ENCODE measurements at regions of chr5 and their contacts with region 1.

Region 1: GRCh38 chr5:176415952-176416924 is at the start of gene CLTB:
- DNase-seq: peak; percentile 77 to 87
- ATAC-seq: peak; percentile 95 to 97
- H3K4me3 ChIP-seq: peak within 1 kb of the TSS; percentile 94
- H3K27ac ChIP-seq: peak within 1 kb of the TSS; percentile 80 to 91
- H3K4me1 ChIP-seq: peaks cover 16% of the 10 kb centered on the region
- CTCF ChIP-seq: peak; percentile 99
- EP300 ChIP-seq: no peak
- POLR2A ChIP-seq: peak; percentile 48; the same call in 1 of the 2 replicates
- RAD21 ChIP-seq: peak; percentile 79 to 97
- polyA plus RNA-seq, gene CLTB: 30.9 and 47.4 TPM in 2 replicates

Region 2: DNA sequence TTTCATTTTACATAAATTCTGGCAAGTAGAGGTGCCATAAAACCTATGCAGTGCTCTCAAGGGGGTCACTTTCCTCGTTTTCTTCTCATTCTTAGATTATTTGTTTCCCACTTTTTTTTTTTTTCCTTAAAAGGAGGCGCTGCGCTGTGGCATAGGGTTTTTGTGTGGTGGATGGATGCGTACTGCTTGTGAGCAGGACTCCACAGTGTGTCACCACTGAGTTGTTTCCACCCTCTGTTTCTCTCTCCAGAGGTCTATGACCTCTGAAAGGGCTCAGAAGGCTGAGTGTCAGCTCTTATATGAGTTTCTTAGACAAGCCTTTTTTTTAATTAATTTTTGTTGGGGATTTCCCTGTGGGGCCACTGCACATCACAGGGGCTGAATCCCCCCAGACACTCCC is 13.7 kb after region 1 on chr5:
- CTCF ChIA-PET with region 1: interaction called, 19 read pairs
- POLR2A ChIA-PET with region 1: no interaction called
- DNase-seq: peak in 1 of 2 experiments; percentile 49
- ATAC-seq: peak; percentile 66 to 86; a peak in 4 of 6 replicates
- H3K4me3 ChIP-seq: no peak overlapping the region
- H3K27ac ChIP-seq: no peak overlapping the region
- H3K4me1 ChIP-seq: peaks cover 12% of the 10 kb centered on the region; the same call in 2 of the 3 replicates
- CTCF ChIP-seq: no peak
- EP300 ChIP-seq: no peak
- POLR2A ChIP-seq: no peak
- RAD21 ChIP-seq: no peak

Region 3: GRCh38 chr5:176441921-176442323 is 25.7 kb after region 1 on chr5:
- CTCF ChIA-PET with region 1: interaction called, 34 read pairs
- POLR2A ChIA-PET with region 1: interaction called, 14 read pairs
- DNase-seq: no peak
- ATAC-seq: peak; percentile 43 to 57; a peak in 4 of 6 replicates
- H3K4me3 ChIP-seq: no peak overlapping the region
- H3K27ac ChIP-seq: no peak overlapping the region
- H3K4me1 ChIP-seq: peaks cover 17% of the 10 kb centered on the region; the same call in 2 of the 3 replicates
- CTCF ChIP-seq: no peak
- EP300 ChIP-seq: no peak
- POLR2A ChIP-seq: no peak
- RAD21 ChIP-seq: no peak

Region 4: DNA sequence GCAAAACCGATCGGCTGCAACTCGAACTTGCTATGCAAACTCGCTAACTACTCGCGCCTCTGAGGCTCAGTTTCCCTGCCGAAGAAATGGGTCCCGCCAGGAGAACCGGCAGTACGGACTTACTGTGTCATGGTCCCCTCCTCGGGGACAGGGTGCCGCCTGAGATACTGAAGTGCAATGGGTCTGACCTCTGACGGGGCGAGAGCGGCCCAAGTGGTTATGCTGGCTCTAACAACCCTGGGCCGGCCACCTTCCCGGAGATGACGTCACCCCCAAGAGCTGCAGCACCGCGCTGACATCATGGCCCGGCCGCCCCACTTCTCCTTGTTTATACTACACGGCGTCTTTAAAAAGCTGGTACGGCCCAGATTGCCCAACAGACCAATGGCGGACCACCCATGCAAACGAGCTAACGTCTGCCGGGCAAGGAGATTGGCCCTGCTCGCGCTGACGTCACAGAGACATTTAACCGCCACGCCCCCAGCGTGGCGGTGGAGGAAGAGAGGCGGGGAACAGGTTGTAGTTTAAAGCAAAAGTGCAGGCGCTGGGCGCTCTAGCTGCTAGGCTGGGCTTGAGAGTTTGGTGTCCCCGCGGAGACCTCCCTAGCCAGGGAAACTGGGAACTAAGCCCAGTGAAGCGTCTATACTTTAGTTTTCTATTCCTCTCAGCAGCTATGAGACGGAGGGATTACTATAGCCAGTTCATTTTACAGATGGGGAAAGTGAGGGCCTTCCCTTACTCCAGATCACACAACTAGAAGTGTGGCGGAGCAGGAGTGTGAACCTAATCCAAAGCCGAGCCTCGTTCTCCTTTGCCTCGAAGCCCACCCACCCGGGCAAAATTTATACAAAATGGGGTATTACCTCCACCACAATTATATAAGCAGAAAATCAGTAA is 121.6 kb after region 1 on chr5:
- CTCF ChIA-PET with region 1: interaction called, 37 read pairs
- POLR2A ChIA-PET with region 1: interaction called, 7 read pairs
- DNase-seq: peak; percentile 94 to 99
- ATAC-seq: peak; percentile 73 to 84
- H3K4me3 ChIP-seq: peak overlapping the region; percentile 84
- H3K27ac ChIP-seq: peak overlapping the region; percentile 95 to 97
- H3K4me1 ChIP-seq: peaks cover 56% of the 10 kb centered on the region
- CTCF ChIP-seq: no peak
- EP300 ChIP-seq: no peak
- POLR2A ChIP-seq: no peak; the same call in 1 of the 2 replicates
- RAD21 ChIP-seq: no peak

Region 5: DNA sequence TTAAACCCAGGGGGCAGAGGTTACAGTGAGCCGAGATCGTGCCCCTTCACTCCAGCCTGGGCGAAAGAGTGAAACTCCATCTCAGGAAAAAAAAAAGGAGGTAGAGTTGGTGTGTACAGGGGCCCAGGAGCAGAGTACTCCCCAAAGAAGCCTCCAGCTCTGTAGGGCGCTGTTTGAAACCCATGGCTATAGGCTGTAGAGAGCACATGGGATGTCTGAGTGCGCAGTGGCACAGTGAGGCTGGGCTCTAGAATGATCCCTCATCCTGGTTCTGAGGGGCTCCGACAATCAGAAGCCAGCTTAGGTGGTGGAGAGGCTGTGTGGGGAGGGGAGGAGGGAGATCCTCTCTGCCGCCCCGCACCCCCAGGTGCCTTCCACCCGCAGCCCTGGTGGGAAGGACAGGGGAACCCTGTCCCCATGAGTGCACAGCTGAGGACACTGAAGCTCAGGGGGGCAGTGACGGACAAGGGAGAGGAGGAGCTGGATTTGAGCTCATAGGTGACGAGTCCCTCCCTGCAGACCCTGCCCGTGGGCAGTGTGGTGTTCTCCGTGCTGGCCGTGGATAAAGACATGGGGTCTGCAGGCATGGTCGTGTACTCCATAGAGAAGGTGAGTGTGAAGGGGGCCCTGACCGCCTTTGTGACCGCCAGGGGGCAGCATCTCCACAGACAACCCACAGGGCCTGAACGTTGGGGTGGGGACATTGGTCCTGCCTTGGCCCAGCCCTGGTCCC is 157.5 kb after region 1 on chr5:
- CTCF ChIA-PET with region 1: interaction called, 31 read pairs
- POLR2A ChIA-PET with region 1: no interaction called
- DNase-seq: peak; percentile 58 to 70
- ATAC-seq: peak; percentile 60 to 87; a peak in 5 of 6 replicates
- H3K4me3 ChIP-seq: no peak overlapping the region
- H3K27ac ChIP-seq: no peak overlapping the region
- H3K4me1 ChIP-seq: 0 out of 3 replicates have a peak, but pooled peaks cover 6% of the 10 kb centered on the region
- CTCF ChIP-seq: peak; percentile 75
- EP300 ChIP-seq: no peak
- POLR2A ChIP-seq: no peak
- RAD21 ChIP-seq: peak; percentile 80